Panc1 (cell line): ENCODE measurements at regions of chr7 and their contacts with region 1.

Region 1: DNA sequence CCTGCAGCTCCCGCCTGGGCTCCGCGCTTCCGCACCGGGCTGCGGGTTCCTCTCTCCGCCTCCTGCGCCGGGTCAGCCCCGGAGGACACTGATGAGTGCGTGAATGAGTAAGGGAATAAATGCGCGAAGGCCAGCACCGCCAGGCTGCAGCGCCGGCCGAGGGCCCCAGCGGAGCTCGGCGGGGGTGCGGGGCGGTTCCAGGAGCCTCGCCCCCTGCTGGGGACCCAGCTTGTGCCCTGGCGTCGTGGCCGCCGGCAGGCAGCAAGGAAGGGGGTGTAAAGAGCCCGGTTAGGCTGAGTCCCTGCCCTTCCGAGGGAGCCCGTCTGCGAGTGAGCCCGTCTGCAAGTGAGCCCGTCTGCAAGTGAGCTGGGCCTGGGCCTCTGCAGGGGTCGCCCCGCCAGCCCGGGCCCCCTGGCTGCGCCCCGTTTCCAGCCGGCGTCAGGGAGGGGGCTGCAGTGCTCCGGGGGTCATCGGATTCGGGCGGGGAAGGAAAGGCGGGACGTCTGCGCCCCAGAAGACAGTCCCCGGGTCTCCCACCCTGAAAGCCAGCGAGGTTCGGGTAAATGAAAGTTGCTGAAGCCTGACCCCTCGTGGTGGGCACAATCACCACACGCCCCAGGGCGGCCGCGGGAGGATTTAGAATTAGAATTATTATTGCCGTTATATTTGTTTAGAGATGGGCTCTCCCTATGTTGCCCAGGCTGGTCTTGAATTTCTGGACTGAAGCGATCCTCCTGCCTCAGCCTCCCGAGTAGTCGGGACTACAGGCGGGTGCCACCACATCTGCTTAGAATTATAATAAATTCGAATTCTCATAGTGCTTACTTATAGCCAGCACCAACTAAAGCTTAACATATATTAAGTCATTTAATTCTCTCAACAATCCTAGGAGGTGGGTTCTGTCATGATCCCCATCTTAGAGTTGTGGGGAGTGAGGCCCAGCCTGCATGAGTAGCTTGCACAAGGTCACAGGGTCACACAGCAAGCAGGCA is 8.6 kb upstream of the CRYGN start:
- DNase-seq: no peak
- ATAC-seq: peak; percentile 87
- H3K4me3 ChIP-seq: peak overlapping the region; percentile 35 to 55
- H3K27ac ChIP-seq: peak overlapping the region; percentile 78
- H3K4me1 ChIP-seq: peaks cover 29% of the 10 kb centered on the region
- H3K27me3 ChIP-seq: no peaks in the 10 kb centered on the region
- CTCF ChIP-seq: peak; percentile 92

Region 2: GRCh38 chr7:151368136-151368571 is 80.4 kb before region 1 on chr7:
- CTCF ChIA-PET with region 1: interaction called, 12 read pairs
- POLR2A ChIA-PET with region 1: interaction called, 3 read pairs
- in situ Hi-C with region 1: loop called (anchors 5 kb)
- intact Hi-C with region 1: loop called (anchors 1 kb)
- DNase-seq: peak; percentile 64
- ATAC-seq: peak; percentile 100
- H3K4me3 ChIP-seq: no peak overlapping the region
- H3K27ac ChIP-seq: peak overlapping the region; percentile 52; the same call in 1 of the 2 replicates
- H3K4me1 ChIP-seq: peaks cover 13% of the 10 kb centered on the region
- H3K27me3 ChIP-seq: no peaks in the 10 kb centered on the region
- CTCF ChIP-seq: peak; percentile 96

Region 3: GRCh38 chr7:151406051-151406875 is 42.3 kb before region 1 on chr7:
- CTCF ChIA-PET with region 1: no interaction called
- POLR2A ChIA-PET with region 1: no interaction called
- in situ Hi-C with region 1: no loop called
- intact Hi-C with region 1: no loop called
- DNase-seq: no peak
- ATAC-seq: no peak
- H3K4me3 ChIP-seq: no peak overlapping the region
- H3K27ac ChIP-seq: no peak overlapping the region
- H3K4me1 ChIP-seq: peaks cover 12% of the 10 kb centered on the region
- H3K27me3 ChIP-seq: no peaks in the 10 kb centered on the region
- CTCF ChIP-seq: no peak

Region 4: DNA sequence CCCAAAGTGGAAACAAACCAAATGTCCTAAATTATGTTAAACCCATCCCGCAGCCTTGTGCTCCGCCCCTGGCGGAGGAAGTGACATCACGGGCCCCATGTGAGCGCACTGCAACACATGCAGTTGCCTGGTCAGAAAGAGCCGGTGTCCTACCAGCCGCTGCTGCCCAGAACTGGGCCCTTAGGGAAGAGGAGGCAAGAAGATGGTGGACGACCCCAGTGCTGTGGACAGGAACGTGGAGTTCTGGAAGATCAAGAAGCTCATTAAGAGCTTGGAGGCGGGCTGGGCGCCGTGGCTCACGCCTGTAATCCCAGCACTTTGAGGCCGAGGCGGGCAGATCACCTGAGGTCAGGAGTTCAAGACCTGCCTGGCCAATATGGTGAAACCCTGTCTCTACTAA is 53.1 kb after region 1 on chr7:
- CTCF ChIA-PET with region 1: interaction called, 15 read pairs
- POLR2A ChIA-PET with region 1: no interaction called
- in situ Hi-C with region 1: no loop called
- intact Hi-C with region 1: no loop called
- DNase-seq: no peak
- ATAC-seq: no peak
- H3K4me3 ChIP-seq: no peak overlapping the region
- H3K27ac ChIP-seq: no peak overlapping the region
- H3K4me1 ChIP-seq: peaks cover 64% of the 10 kb centered on the region
- H3K27me3 ChIP-seq: no peaks in the 10 kb centered on the region
- CTCF ChIP-seq: no peak

Region 5: DNA sequence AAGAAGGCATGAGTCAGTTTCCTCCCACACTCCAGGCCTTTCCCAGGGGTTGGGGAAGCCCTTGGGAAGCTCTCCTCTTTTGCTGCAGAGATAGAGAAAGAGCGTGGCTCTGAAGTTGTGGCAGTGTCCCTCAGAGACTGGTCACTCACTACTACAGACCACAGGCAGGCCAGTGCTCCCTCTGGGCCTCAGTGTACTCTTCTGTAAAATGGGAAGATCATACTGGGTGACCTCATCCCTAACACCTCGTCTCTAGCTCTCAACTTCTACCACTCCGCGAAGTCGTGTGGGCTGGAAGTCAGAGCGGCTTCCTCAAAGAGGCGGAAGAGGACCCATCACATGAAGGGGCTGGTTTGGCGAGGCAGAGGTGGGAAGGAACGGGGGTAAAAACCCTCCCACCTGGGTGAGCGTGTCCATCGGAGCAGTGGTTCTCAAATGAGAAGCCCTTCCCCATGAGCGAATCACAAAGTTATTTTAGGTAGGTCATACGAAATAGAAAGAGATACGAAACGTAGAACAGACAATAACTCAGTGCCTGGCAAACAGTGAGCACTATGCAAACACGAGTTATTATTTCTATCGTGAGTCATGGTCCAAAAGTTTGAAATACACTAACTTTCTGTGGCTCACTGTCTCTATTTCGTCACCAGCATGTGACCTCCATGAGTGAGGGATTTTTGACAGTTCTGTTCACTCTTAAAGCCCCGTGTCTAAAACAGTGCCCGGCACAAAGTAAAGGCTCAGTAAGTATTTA is 395.7 kb after region 1 on chr7:
- CTCF ChIA-PET with region 1: no interaction called
- POLR2A ChIA-PET with region 1: no interaction called
- in situ Hi-C with region 1: no loop called
- intact Hi-C with region 1: no loop called
- DNase-seq: peak; percentile 46
- ATAC-seq: peak; percentile 19; the same call in 1 of the 2 replicates
- H3K4me3 ChIP-seq: no peak overlapping the region
- H3K27ac ChIP-seq: no peak overlapping the region
- H3K4me1 ChIP-seq: no peaks in the 10 kb centered on the region
- H3K27me3 ChIP-seq: no peaks in the 10 kb centered on the region
- CTCF ChIP-seq: no peak